ENCODE measurements at regions of chr14 and their contacts with region 1.

Region 1: GRCh38 chr14:34220921-34221320 is 241.1 kb downstream of the SPTSSA start:
- DNase-seq: peak; percentile 40
- ATAC-seq: peak; percentile 99
- H3K4me3 ChIP-seq: no peak overlapping the region
- H3K27ac ChIP-seq: no peak overlapping the region
- H3K4me1 ChIP-seq: no peaks in the 10 kb centered on the region
- H3K27me3 ChIP-seq: peaks cover 0 to 2% of the 10 kb centered on the region in 2 experiments; a peak in 1 of 4 replicates
- CTCF ChIP-seq: no peak
- EP300 ChIP-seq: peak in 1 of 2 experiments; percentile 83; a peak in 2 of 4 replicates
- POLR2A ChIP-seq: no peak
- RAD21 ChIP-seq: no peak

Region 2: GRCh38 chr14:34104489-34105397 is 116.2 kb before region 1 on chr14:
- CTCF ChIA-PET with region 1: interaction called, 101 read pairs
- POLR2A ChIA-PET with region 1: no interaction called
- RAD21 ChIA-PET with region 1: interaction called, 30 read pairs
- SMC1A ChIA-PET with region 1: interaction called, 139 read pairs
- in situ Hi-C with region 1: no loop called
- intact Hi-C with region 1: no loop called
- DNase-seq: no peak
- ATAC-seq: no peak
- H3K4me3 ChIP-seq: no peak overlapping the region
- H3K27ac ChIP-seq: no peak overlapping the region
- H3K4me1 ChIP-seq: no peaks in the 10 kb centered on the region
- H3K27me3 ChIP-seq: no peaks in the 10 kb centered on the region; a peak in 1 of 4 replicates
- CTCF ChIP-seq: no peak
- EP300 ChIP-seq: no peak
- POLR2A ChIP-seq: no peak
- RAD21 ChIP-seq: no peak

Region 3: GRCh38 chr14:34165829-34166350 is 55.0 kb before region 1 on chr14:
- CTCF ChIA-PET with region 1: no interaction called
- POLR2A ChIA-PET with region 1: no interaction called
- RAD21 ChIA-PET with region 1: interaction called, 6 read pairs
- SMC1A ChIA-PET with region 1: interaction called, 15 read pairs
- in situ Hi-C with region 1: no loop called
- intact Hi-C with region 1: loop called (anchors 5 kb)
- DNase-seq: no peak
- ATAC-seq: peak; percentile 17; the same call in 1 of the 3 replicates
- H3K4me3 ChIP-seq: no peak overlapping the region
- H3K27ac ChIP-seq: no peak overlapping the region
- H3K4me1 ChIP-seq: no peaks in the 10 kb centered on the region
- H3K27me3 ChIP-seq: no peaks in the 10 kb centered on the region
- CTCF ChIP-seq: no peak
- EP300 ChIP-seq: no peak
- POLR2A ChIP-seq: no peak
- RAD21 ChIP-seq: no peak

Region 4: GRCh38 chr14:34172550-34173368 is 48.2 kb before region 1 on chr14:
- CTCF ChIA-PET with region 1: interaction called, 4 read pairs
- POLR2A ChIA-PET with region 1: no interaction called
- RAD21 ChIA-PET with region 1: interaction called, 4 read pairs
- SMC1A ChIA-PET with region 1: interaction called, 19 read pairs
- in situ Hi-C with region 1: no loop called
- intact Hi-C with region 1: loop called (anchors 5 kb)
- DNase-seq: no peak
- ATAC-seq: no peak
- H3K4me3 ChIP-seq: no peak overlapping the region
- H3K27ac ChIP-seq: no peak overlapping the region
- H3K4me1 ChIP-seq: peaks cover 12% of the 10 kb centered on the region
- H3K27me3 ChIP-seq: no peaks in the 10 kb centered on the region
- CTCF ChIP-seq: no peak
- EP300 ChIP-seq: no peak
- POLR2A ChIP-seq: no peak
- RAD21 ChIP-seq: no peak

Region 5: DNA sequence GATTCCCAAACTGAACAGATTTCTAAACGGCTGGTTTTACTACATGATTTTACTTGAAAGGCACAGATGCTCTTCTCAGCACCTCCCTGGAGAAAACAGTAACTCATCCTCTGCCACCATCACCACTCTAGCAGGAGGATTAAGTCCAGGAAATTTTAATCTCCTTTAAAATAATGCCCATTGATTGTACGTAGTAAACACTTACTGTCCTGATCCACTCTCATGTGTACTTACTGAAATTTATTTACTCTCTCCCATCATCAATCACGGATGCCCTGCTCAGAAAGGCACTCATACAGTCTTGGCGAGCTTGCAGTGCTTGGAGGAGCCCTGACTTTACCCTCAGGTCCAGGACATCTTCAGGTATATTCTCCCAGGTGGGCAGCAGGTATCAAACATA is 30.2 kb before region 1 on chr14:
- CTCF ChIA-PET with region 1: no interaction called
- POLR2A ChIA-PET with region 1: interaction called, 5 read pairs
- RAD21 ChIA-PET with region 1: no interaction called
- SMC1A ChIA-PET with region 1: interaction called, 13 read pairs
- in situ Hi-C with region 1: no loop called
- intact Hi-C with region 1: no loop called
- DNase-seq: no peak
- ATAC-seq: no peak
- H3K4me3 ChIP-seq: no peak overlapping the region
- H3K27ac ChIP-seq: no peak overlapping the region
- H3K4me1 ChIP-seq: no peaks in the 10 kb centered on the region
- H3K27me3 ChIP-seq: no peaks in the 10 kb centered on the region
- CTCF ChIP-seq: no peak
- EP300 ChIP-seq: no peak
- POLR2A ChIP-seq: no peak
- RAD21 ChIP-seq: no peak

Region 6: GRCh38 chr14:34237081-34237480 is 16.2 kb after region 1 on chr14:
- CTCF ChIA-PET with region 1: interaction called, 4 read pairs
- POLR2A ChIA-PET with region 1: no interaction called
- RAD21 ChIA-PET with region 1: no interaction called
- SMC1A ChIA-PET with region 1: interaction called, 11 read pairs
- in situ Hi-C with region 1: no loop called
- intact Hi-C with region 1: no loop called
- DNase-seq: no peak
- ATAC-seq: no peak
- H3K4me3 ChIP-seq: no peak overlapping the region
- H3K27ac ChIP-seq: no peak overlapping the region
- H3K4me1 ChIP-seq: no peaks in the 10 kb centered on the region
- H3K27me3 ChIP-seq: no peaks in the 10 kb centered on the region; a peak in 1 of 4 replicates
- CTCF ChIP-seq: no peak
- EP300 ChIP-seq: no peak
- POLR2A ChIP-seq: no peak
- RAD21 ChIP-seq: no peak

Region 7: GRCh38 chr14:34270361-34270760 is 49.4 kb after region 1 on chr14:
- CTCF ChIA-PET with region 1: no interaction called
- POLR2A ChIA-PET with region 1: no interaction called
- RAD21 ChIA-PET with region 1: no interaction called
- SMC1A ChIA-PET with region 1: no interaction called
- in situ Hi-C with region 1: no loop called
- intact Hi-C with region 1: no loop called
- DNase-seq: no peak
- ATAC-seq: no peak
- H3K4me3 ChIP-seq: no peak overlapping the region
- H3K27ac ChIP-seq: no peak overlapping the region
- H3K4me1 ChIP-seq: no peaks in the 10 kb centered on the region
- H3K27me3 ChIP-seq: no peaks in the 10 kb centered on the region
- CTCF ChIP-seq: no peak
- EP300 ChIP-seq: no peak
- POLR2A ChIP-seq: no peak
- RAD21 ChIP-seq: no peak

Region 8: GRCh38 chr14:34280562-34280961 is 59.6 kb after region 1 on chr14:
- CTCF ChIA-PET with region 1: no interaction called
- POLR2A ChIA-PET with region 1: no interaction called
- RAD21 ChIA-PET with region 1: no interaction called
- SMC1A ChIA-PET with region 1: no interaction called
- in situ Hi-C with region 1: no loop called
- intact Hi-C with region 1: no loop called
- DNase-seq: no peak
- ATAC-seq: no peak
- H3K4me3 ChIP-seq: no peak overlapping the region
- H3K27ac ChIP-seq: no peak overlapping the region
- H3K4me1 ChIP-seq: no peaks in the 10 kb centered on the region
- H3K27me3 ChIP-seq: no peaks in the 10 kb centered on the region
- CTCF ChIP-seq: no peak
- EP300 ChIP-seq: no peak
- POLR2A ChIP-seq: no peak
- RAD21 ChIP-seq: no peak

Measured in GM12878 (cell line).